ENCODE measurements at regions of chr7 and their contacts with region 1.

Region 1: GRCh38 chr7:44200647-44201461 is at the start of gene YKT6:
- DNase-seq: peak; percentile 99
- H3K4me3 ChIP-seq: peak within 1 kb of the TSS; percentile 92 to 99
- H3K27ac ChIP-seq: peak within 1 kb of the TSS; percentile 80 to 85
- H3K4me1 ChIP-seq: peaks cover 5 to 16% of the 10 kb centered on the region in 2 experiments; a peak in 2 of 4 replicates
- H3K27me3 ChIP-seq: peaks cover 6% of the 10 kb centered on the region; the same call in 1 of the 2 replicates
- CTCF ChIP-seq: peak; percentile 69
- EP300 ChIP-seq: no peak; a peak in 1 of 4 replicates
- RAD21 ChIP-seq: peak; percentile 31; the same call in 1 of the 2 replicates
- polyA plus RNA-seq, gene YKT6: 170 and 213 TPM in 2 replicates

Region 2: GRCh38 chr7:43834463-43835251 is 366.2 kb before region 1 on chr7:
- CTCF ChIA-PET with region 1: no interaction called
- POLR2A ChIA-PET with region 1: no interaction called
- DNase-seq: no peak
- H3K4me3 ChIP-seq: no peak overlapping the region
- H3K27ac ChIP-seq: no peak overlapping the region
- H3K4me1 ChIP-seq: no peaks in the 10 kb centered on the region; a peak in 1 of 4 replicates
- H3K27me3 ChIP-seq: no peaks in the 10 kb centered on the region; the same call in 1 of the 2 replicates
- CTCF ChIP-seq: no peak
- EP300 ChIP-seq: no peak
- RAD21 ChIP-seq: no peak

Region 3: DNA sequence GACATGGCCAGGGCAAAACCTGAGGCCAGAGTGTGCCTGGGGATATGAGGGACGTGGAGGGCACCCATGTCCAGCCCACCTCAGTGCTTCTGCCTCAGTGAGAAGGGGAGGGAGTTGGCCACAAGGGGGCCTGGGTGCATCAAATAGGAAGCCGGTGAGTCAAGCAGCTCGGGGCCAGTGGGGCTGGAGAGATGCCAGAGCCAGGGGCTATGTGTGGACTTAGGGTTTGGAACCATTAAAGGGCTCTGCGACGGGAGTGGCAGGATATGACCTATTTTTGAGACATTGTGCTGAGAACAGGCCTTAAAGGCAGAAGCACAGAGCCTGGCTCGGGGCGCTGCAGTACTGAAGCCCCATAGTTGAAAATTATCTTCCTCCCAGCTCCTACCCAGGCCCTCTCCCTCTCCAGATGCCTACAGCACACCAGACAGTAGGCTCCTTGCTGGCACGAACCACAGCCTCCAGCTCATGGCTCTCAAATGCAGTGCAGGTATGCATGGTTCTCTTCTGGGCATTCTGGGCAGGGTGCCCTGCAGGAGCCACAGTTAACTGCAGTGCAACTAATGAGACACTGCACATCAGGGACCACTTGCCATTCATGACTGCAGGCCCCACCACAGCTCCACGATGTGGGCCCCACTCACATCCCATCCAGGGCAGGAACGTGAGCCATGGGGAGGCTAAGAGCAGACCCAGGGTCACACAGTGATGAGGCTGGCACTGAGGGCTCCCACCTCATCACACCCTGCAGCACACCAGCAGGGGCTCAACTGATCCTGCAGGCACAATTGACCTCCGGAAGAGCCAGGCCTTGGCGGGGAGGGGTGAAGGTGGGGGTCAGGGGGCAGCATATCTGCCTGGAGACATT is 128.3 kb before region 1 on chr7:
- CTCF ChIA-PET with region 1: interaction called, 68 read pairs
- POLR2A ChIA-PET with region 1: interaction called, 8 read pairs
- DNase-seq: peak; percentile 93
- H3K4me3 ChIP-seq: no peak overlapping the region
- H3K27ac ChIP-seq: peak overlapping the region; percentile 55 to 67
- H3K4me1 ChIP-seq: peaks cover 5 to 22% of the 10 kb centered on the region in 2 experiments
- H3K27me3 ChIP-seq: no peaks in the 10 kb centered on the region
- CTCF ChIP-seq: peak; percentile 98
- EP300 ChIP-seq: no peak
- RAD21 ChIP-seq: peak; percentile 86

Region 4: GRCh38 chr7:44123190-44124003 is 77.5 kb before region 1 on chr7 and contains the start of gene POLD2:
- CTCF ChIA-PET with region 1: interaction called, 15 read pairs
- POLR2A ChIA-PET with region 1: interaction called, 5 read pairs
- DNase-seq: peak; percentile 100
- H3K4me3 ChIP-seq: peak within 1 kb of the TSS; percentile 71 to 92
- H3K27ac ChIP-seq: peak within 1 kb of the TSS; percentile 66 to 73
- H3K4me1 ChIP-seq: peaks cover 7 to 20% of the 10 kb centered on the region in 2 experiments; a peak in 3 of 4 replicates
- H3K27me3 ChIP-seq: no peaks in the 10 kb centered on the region
- CTCF ChIP-seq: no peak
- EP300 ChIP-seq: no peak
- RAD21 ChIP-seq: peak; percentile 10; the same call in 1 of the 2 replicates
- polyA plus RNA-seq, gene POLD2: 163 and 194 TPM in 2 replicates

Region 5: DNA sequence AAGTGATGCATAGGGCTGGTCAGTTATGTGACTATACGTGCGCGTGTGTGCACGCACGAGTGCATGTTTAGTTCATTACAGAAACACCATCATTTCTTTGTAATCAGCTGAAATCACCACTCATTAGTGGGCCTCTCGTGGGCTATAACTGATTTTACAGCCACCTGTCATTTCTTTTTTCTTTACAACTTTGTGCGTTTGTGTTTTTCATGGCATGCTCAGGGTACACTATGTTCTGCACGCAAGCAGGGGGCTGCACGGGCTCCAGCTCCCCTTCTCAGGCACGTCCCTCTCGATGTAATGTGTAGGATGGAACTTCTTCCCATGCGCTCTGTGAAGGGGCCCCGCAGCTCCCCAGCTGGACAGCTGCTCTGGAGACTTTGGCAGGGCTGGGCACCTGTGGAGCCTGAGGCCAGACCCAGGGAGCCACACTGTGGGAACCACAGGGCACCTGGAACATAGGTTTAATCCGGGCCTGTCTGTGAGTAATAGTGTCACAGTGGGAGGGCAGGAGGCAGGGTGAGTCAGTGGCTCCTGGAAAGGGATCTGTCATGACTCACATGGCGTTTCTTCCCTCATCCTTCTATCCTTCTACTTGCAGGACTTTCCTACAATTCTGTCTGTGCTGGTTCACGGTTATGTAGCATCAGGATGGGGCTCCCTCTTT is 16.5 kb before region 1 on chr7:
- CTCF ChIA-PET with region 1: interaction called, 29 read pairs
- POLR2A ChIA-PET with region 1: no interaction called
- DNase-seq: no peak
- H3K4me3 ChIP-seq: no peak overlapping the region
- H3K27ac ChIP-seq: peak overlapping the region in 1 of 2 experiments; percentile 62; a peak in 2 of 4 replicates
- H3K4me1 ChIP-seq: peaks cover 0 to 11% of the 10 kb centered on the region in 2 experiments; a peak in 2 of 4 replicates
- H3K27me3 ChIP-seq: no peaks in the 10 kb centered on the region
- CTCF ChIP-seq: no peak
- EP300 ChIP-seq: peak in 1 of 2 experiments; percentile 57; a peak in 1 of 4 replicates
- RAD21 ChIP-seq: no peak

Region 6: DNA sequence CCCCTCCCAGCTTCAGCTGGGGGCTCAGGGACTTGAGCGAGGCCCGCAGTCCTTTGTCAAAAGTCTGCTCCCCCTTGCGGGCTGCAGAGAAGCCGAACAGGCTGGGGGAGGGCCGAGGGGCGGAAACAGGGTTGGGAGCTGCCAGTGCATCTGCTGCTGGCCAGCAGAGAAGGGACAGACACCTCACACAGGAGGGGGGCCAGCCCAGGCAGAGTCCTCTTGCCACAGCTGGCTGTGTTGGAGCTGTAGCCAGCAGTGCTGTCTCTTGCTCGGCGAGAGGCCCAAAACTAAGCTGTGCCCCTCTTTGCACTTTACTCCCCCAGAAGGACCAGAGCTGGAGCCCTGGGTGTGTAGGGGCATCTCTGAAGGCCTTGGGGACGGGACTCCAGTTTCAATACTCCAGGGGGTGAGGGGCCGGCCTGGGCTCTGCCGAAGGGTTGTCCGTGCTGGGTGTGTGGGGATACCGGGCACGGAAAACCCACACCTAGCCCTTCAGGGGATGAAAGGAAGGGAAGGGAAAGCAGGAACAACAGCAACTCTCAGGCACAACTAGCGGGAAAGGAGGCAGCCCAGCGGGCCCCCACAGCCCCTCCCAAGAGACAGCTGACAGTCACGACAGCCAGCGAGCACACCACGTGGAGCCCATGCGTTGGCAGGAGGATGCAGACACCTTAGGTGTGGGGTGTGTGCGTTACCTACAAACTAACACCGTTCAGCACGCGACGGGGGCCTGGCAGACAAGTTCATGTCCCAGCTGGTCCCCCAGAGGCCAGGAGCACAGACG is 17.8 kb after region 1 on chr7:
- CTCF ChIA-PET with region 1: interaction called, 32 read pairs
- POLR2A ChIA-PET with region 1: interaction called, 6 read pairs
- DNase-seq: peak; percentile 81
- H3K4me3 ChIP-seq: no peak overlapping the region
- H3K27ac ChIP-seq: peak overlapping the region in 1 of 2 experiments; percentile 77; a peak in 2 of 4 replicates
- H3K4me1 ChIP-seq: peaks cover 0 to 42% of the 10 kb centered on the region in 2 experiments; a peak in 1 of 4 replicates
- H3K27me3 ChIP-seq: no peaks in the 10 kb centered on the region
- CTCF ChIP-seq: no peak
- EP300 ChIP-seq: no peak
- RAD21 ChIP-seq: no peak

Region 7: DNA sequence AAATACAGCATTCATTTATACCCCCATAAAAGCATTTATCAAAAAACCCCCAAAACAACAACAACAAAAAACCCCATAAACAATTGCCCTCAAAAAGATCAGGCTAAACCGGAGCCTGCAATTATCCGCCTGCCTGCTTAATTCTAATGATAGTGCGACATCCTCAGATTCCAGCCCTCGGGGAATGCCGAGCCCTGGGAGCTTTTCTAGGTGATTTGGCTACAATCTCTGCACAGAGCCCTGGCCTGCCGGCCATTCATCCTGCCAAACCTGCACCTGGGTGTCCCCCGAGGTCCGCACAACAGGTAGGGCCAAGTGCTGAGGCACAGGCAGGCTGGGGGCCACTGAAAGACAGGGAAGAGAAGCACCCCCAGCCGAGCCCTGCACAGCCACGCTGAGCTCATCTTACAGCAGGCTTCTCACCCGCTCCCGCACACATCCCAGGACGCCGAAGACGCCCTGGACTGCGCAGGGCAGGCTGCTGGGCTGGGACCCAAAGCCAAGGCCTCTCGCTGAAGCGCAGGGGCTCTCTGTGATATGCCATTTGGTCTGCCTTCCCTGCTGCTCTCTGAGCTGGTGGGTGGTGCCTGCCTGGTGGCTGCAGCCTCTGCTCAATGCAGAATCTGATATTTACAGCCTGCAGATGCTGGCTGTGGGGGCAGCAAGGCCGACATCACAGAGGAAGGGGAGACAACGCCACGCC is 67.0 kb after region 1 on chr7:
- CTCF ChIA-PET with region 1: no interaction called
- POLR2A ChIA-PET with region 1: no interaction called
- DNase-seq: peak; percentile 76
- H3K4me3 ChIP-seq: no peak overlapping the region
- H3K27ac ChIP-seq: peak overlapping the region in 1 of 2 experiments; percentile 70; a peak in 2 of 4 replicates
- H3K4me1 ChIP-seq: peaks cover 0 to 59% of the 10 kb centered on the region in 2 experiments; a peak in 2 of 4 replicates
- H3K27me3 ChIP-seq: peaks cover 48% of the 10 kb centered on the region
- CTCF ChIP-seq: no peak
- EP300 ChIP-seq: no peak
- RAD21 ChIP-seq: 0 out of 2 replicates have a peak, but pooled peaks have one; percentile 4

Region 8: GRCh38 chr7:44482502-44483485 is 281.9 kb after region 1 on chr7:
- CTCF ChIA-PET with region 1: no interaction called
- POLR2A ChIA-PET with region 1: no interaction called
- DNase-seq: no peak
- H3K4me3 ChIP-seq: no peak overlapping the region
- H3K27ac ChIP-seq: no peak overlapping the region
- H3K4me1 ChIP-seq: peaks cover 0 to 5% of the 10 kb centered on the region in 2 experiments; a peak in 1 of 4 replicates
- H3K27me3 ChIP-seq: no peaks in the 10 kb centered on the region
- CTCF ChIP-seq: no peak
- EP300 ChIP-seq: no peak
- RAD21 ChIP-seq: no peak